GM23248 (cell line): ENCODE measurements at regions of chr7 and their contacts with region 1.

Region 1: GRCh38 chr7:133230591-133231194 is 22.2 kb upstream of the EXOC4 start:
- DNase-seq: peak; percentile 51
- H3K4me3 ChIP-seq: no peak overlapping the region
- H3K27ac ChIP-seq: no peak overlapping the region
- H3K4me1 ChIP-seq: no peaks in the 10 kb centered on the region
- H3K27me3 ChIP-seq: peaks cover 18% of the 10 kb centered on the region; the same call in 1 of the 2 replicates

Region 2: GRCh38 chr7:132709971-132710567 is 520.6 kb before region 1 on chr7:
- in situ Hi-C with region 1: loop called (anchors 25 kb)
- DNase-seq: peak; percentile 68
- H3K4me3 ChIP-seq: no peak overlapping the region
- H3K27ac ChIP-seq: no peak overlapping the region
- H3K4me1 ChIP-seq: no peaks in the 10 kb centered on the region
- H3K27me3 ChIP-seq: no peaks in the 10 kb centered on the region

Region 3: GRCh38 chr7:133053321-133053891 is 177.3 kb before region 1 on chr7:
- in situ Hi-C with region 1: no loop called
- DNase-seq: peak; percentile 97
- H3K4me3 ChIP-seq: peak overlapping the region; percentile 48
- H3K27ac ChIP-seq: peak overlapping the region; percentile 91
- H3K4me1 ChIP-seq: peaks cover 33% of the 10 kb centered on the region
- H3K27me3 ChIP-seq: no peaks in the 10 kb centered on the region

Region 4: GRCh38 chr7:133320891-133321290 is 90.2 kb after region 1 on chr7:
- in situ Hi-C with region 1: no loop called
- DNase-seq: no peak
- H3K4me3 ChIP-seq: no peak overlapping the region
- H3K27ac ChIP-seq: no peak overlapping the region
- H3K4me1 ChIP-seq: peaks cover under 1% of the 10 kb centered on the region
- H3K27me3 ChIP-seq: no peaks in the 10 kb centered on the region

Region 5: DNA sequence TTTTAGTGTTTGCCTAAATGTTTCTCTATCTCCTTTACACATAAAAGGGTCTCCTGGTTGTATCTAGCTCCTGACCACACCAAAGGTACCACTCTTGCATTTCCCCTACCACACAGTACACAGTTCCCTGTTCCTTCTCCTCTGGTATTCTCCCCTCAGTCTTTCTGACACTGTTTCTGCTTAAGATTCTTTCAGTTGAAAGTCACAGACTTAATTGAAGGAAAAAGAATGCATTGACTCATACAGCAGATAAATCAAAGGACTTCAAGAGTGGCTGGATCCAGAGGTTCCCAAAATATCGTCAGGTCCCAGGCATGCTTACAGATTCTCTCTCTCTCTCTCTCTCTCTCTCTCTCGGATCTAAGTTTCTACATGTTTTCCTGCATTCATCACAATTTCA is 710.8 kb after region 1 on chr7:
- in situ Hi-C with region 1: no loop called
- DNase-seq: peak; percentile 78
- H3K4me3 ChIP-seq: no peak overlapping the region; the same call in 1 of the 2 replicates
- H3K27ac ChIP-seq: peak overlapping the region; percentile 13; the same call in 1 of the 2 replicates
- H3K4me1 ChIP-seq: peaks cover 15% of the 10 kb centered on the region
- H3K27me3 ChIP-seq: no peaks in the 10 kb centered on the region